ENCODE measurements at regions of chr4 and their contacts with region 1.

Region 1: DNA sequence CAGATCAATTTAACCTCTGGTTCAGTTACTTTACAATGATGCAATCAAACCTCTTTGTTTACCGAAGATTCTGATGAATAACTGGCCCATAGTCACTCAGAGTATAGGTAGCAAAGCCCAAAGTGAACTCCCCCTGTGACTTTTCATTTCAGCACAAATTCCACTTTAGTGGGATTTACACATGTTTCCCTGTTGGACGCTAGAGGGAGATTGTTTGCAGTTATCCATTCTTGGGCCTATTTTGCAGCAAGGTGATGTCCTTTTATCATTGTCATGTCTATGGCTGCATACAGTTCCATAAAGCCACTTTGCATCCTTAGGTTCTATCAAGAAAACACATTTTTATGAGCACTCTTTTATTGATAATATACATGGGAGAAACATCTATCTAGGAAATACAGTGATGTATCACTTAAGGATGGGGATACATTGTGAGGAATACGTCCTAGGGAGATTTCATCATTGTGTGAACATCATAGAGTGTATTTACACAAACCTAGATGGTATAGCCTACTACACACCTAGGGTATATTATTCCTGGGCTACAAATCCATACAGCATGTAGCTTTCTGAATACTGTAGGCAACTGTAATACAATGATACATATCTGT is 14.5 kb upstream of the DKK2 start:
- DNase-seq: no peak
- H3K4me3 ChIP-seq: no peak overlapping the region
- H3K27ac ChIP-seq: no peak overlapping the region
- H3K4me1 ChIP-seq: no peaks in the 10 kb centered on the region
- H3K27me3 ChIP-seq: no peaks in the 10 kb centered on the region
- CTCF ChIP-seq: peak; percentile 42

Region 2: GRCh38 chr4:107183155-107183774 is 132.6 kb after region 1 on chr4:
- intact Hi-C with region 1: loop called (anchors 10 kb)
- DNase-seq: peak; percentile 29
- H3K4me3 ChIP-seq: no peak overlapping the region
- H3K27ac ChIP-seq: no peak overlapping the region
- H3K4me1 ChIP-seq: no peaks in the 10 kb centered on the region
- H3K27me3 ChIP-seq: no peaks in the 10 kb centered on the region
- CTCF ChIP-seq: peak; percentile 68

Region 3: DNA sequence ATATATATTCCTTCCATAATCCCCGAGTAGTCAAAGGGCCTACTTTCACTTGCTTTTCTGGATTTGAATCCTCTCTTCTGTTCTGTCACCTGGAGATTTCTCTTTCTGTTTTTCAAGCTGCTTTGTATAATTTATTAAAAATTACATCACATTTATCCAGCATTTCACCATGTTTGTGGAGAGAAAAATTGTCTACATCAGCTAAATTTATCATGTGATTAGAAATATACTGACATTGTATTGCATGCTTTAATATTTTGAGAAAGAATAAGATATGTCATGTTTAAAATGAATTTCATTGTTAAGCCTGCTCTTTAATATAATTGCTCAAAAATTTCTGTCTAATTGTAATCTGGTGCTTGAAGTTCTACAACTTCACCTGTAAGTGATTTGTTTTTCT is 308.6 kb after region 1 on chr4:
- intact Hi-C with region 1: no loop called
- DNase-seq: no peak
- H3K4me3 ChIP-seq: no peak overlapping the region
- H3K27ac ChIP-seq: no peak overlapping the region
- H3K4me1 ChIP-seq: no peaks in the 10 kb centered on the region
- H3K27me3 ChIP-seq: no peaks in the 10 kb centered on the region
- CTCF ChIP-seq: no peak

Measured in colonic mucosa (tissue), 4 donors.